ENCODE measurements at regions of chr2 and their contacts with region 1.

Region 1: DNA sequence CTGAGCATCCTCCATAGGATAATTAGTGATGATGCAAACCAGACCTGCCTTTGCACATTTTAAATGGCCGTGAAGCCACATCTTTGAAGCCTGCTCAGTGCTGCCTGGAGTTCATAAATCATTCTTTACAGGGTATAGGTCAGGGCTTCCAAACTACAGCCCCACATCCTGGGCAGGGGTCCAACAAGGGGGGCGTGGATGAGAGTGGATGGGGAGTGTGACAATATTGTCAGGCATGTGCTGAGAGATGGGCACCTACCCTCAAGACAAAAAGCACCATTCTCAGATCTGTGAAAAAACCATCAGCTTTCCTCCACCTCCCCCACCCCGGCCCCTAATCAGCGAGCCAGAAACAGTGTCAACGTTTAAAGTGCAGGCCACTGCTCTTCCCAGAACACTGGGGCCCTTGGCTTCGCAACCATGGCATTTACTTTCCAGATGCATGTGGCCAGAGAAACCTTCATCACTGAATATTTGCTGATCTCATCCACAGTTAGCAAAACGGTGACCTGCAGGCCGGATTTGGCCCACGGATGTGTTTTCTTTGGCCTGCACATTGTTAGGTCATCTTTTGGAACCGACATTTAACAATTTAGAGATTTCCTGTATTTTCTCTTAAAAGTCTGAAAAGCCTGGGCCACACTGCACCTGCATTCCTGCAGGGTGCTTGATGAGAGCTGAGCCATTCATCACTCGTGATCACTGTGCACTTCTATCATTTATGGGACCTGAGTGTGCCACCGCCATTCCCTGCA is 130.7 kb downstream of the ANKRD44 start:
- DNase-seq: peak in 1 of 2 donors; percentile 40
- ATAC-seq: no peak
- H3K4me3 ChIP-seq: no peak overlapping the region
- H3K27ac ChIP-seq: no peak overlapping the region
- H3K4me1 ChIP-seq: peaks cover 14% of the 10 kb centered on the region
- H3K27me3 ChIP-seq: no peaks in the 10 kb centered on the region
- CTCF ChIP-seq: no peak

Region 2: DNA sequence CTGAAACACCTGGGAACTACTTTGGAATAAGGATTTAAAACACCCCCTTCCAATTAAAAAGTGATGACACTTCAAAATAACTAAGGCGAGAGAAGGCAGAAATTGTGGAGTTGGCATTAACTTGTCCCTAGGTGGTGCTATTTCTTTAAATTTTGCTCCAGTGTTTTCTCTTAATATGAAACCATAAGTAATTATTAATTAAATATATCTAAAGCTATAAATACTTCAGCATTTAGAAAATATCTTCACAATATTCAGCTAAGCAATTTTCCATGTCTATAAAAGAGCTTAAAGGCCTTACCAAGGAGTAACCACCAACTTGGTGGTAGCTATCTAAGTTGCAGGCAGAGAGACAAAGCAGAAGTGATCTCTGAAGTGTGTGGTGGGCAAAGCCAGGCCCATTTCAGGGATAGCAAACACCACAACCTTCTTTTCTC is 66.6 kb before region 1 on chr2:
- intact Hi-C with region 1: loop called in 1 of 2 experiments (anchors 5 kb)
- DNase-seq: no peak
- ATAC-seq: peak in 3 of 4 donors; percentile 36 to 74 (median 59)
- H3K4me3 ChIP-seq: no peak overlapping the region
- H3K27ac ChIP-seq: no peak overlapping the region
- H3K4me1 ChIP-seq: no peaks in the 10 kb centered on the region
- H3K27me3 ChIP-seq: no peaks in the 10 kb centered on the region
- CTCF ChIP-seq: peak; percentile 72